ENCODE measurements at regions of chr9 and their contacts with region 1.

Region 1: GRCh38 chr9:503881-504852 is 289.5 kb downstream of the DOCK8 start:
- DNase-seq: peak; percentile 72 to 85 (median 79)
- H3K4me3 ChIP-seq: peak within 1 kb of the TSS; percentile 47 to 86
- H3K4me3 Mint-ChIP-seq: peak within 1 kb of the TSS; percentile 83 to 89 (median 86)
- H3K27ac ChIP-seq: peak within 1 kb of the TSS; percentile 12
- H3K27ac Mint-ChIP-seq: peak within 1 kb of the TSS; percentile 37 to 85 (median 83)
- H3K4me1 ChIP-seq: peaks cover 7% of the 10 kb centered on the region
- H3K4me1 Mint-ChIP-seq: peaks cover 7 to 30% (median 16%) of the 10 kb centered on the region in 4 donors
- H3K27me3 ChIP-seq: no peaks in the 10 kb centered on the region
- H3K27me3 Mint-ChIP-seq: peaks cover 3 to 5% of the 10 kb centered on the region in 2 donors

Region 2: GRCh38 chr9:214648-215493 is 289.3 kb before region 1 on chr9 and contains the start of gene DOCK8:
- CTCF ChIA-PET with region 1: no interaction called
- POLR2A ChIA-PET with region 1: no interaction called
- intact Hi-C with region 1: no loop called
- DNase-seq: peak; percentile 42 to 68 (median 55)
- H3K4me3 ChIP-seq: peak within 1 kb of the TSS; percentile 27 to 68
- H3K4me3 Mint-ChIP-seq: peak within 1 kb of the TSS; percentile 89 to 94 (median 92)
- H3K27ac ChIP-seq: peak within 1 kb of the TSS; percentile 48
- H3K27ac Mint-ChIP-seq: peak within 1 kb of the TSS; percentile 42 to 92 (median 84)
- H3K4me1 ChIP-seq: peaks cover 19% of the 10 kb centered on the region
- H3K4me1 Mint-ChIP-seq: peaks cover 11 to 29% (median 18%) of the 10 kb centered on the region in 4 donors
- H3K27me3 ChIP-seq: no peaks in the 10 kb centered on the region
- H3K27me3 Mint-ChIP-seq: no peaks in the 10 kb centered on the region
- total RNA-seq, gene DOCK8: 307 to 315 TPM

Region 3: GRCh38 chr9:447230-448025 is 56.7 kb before region 1 on chr9:
- CTCF ChIA-PET with region 1: no interaction called
- POLR2A ChIA-PET with region 1: no interaction called
- intact Hi-C with region 1: loop called (anchors 2 kb)
- DNase-seq: peak; percentile 61 to 87 (median 71)
- H3K4me3 ChIP-seq: no peak overlapping the region
- H3K4me3 Mint-ChIP-seq: peak overlapping the region; percentile 1 to 44 (median 20)
- H3K27ac ChIP-seq: peak overlapping the region; percentile 3
- H3K27ac Mint-ChIP-seq: peak overlapping the region; percentile 67 to 90 (median 84)
- H3K4me1 ChIP-seq: peaks cover 22% of the 10 kb centered on the region
- H3K4me1 Mint-ChIP-seq: peaks cover 18 to 34% (median 27%) of the 10 kb centered on the region in 4 donors
- H3K27me3 ChIP-seq: no peaks in the 10 kb centered on the region
- H3K27me3 Mint-ChIP-seq: no peaks in the 10 kb centered on the region

Region 4: DNA sequence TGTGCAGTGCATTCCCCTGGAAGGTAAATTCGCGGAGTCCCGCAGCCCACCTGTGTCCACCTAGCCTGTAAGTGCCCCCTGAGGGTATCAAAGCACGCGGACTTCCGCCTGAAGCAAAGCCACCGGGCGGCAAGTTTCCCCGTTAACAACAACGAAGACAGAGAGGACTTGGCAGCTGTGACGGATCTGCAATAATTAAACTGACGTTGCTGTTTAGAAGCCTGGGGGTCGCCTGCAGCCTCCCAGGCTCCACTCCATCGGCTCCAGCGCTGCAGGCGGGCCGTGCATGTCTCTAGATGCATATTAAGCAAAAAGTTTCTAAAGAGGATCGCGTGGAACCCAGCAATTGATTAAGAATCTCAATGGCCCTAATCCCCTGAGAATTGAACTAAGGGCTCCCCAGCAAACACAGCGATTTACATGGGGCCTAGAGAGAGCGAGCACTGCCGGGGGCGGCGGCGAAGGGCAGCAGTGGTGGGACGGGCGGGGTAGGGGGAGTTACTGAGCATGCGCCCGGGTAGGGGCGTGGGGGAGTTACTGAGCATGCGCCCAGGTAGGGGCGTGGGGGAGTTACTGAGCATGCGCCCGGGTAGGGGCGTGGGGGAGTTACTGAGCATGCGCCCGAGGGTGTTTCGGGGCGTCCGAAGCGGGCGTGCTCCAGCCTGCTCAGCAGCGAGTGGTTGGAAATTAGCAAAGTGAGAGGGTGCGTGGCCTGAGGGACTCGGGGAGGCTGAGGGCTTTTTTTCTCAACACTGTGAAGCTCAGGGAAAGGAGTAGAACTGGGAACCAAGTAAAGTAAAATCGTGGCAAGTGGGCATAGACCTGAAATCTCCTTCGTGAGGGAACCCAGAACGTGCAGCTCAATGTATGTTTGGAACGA is 34.3 kb before region 1 on chr9:
- CTCF ChIA-PET with region 1: interaction called, 9 read pairs
- POLR2A ChIA-PET with region 1: interaction called, 6 read pairs
- intact Hi-C with region 1: loop called (anchors 1 kb)
- DNase-seq: peak; percentile 80 to 89 (median 88)
- H3K4me3 ChIP-seq: peak overlapping the region; percentile 74 to 88
- H3K4me3 Mint-ChIP-seq: peak overlapping the region; percentile 89 to 99 (median 96)
- H3K27ac ChIP-seq: peak overlapping the region; percentile 68
- H3K27ac Mint-ChIP-seq: peak overlapping the region; percentile 93 to 98 (median 96)
- H3K4me1 ChIP-seq: peaks cover 21% of the 10 kb centered on the region
- H3K4me1 Mint-ChIP-seq: peaks cover 17 to 28% (median 22%) of the 10 kb centered on the region in 4 donors
- H3K27me3 ChIP-seq: no peaks in the 10 kb centered on the region
- H3K27me3 Mint-ChIP-seq: no peaks in the 10 kb centered on the region

Region 5: DNA sequence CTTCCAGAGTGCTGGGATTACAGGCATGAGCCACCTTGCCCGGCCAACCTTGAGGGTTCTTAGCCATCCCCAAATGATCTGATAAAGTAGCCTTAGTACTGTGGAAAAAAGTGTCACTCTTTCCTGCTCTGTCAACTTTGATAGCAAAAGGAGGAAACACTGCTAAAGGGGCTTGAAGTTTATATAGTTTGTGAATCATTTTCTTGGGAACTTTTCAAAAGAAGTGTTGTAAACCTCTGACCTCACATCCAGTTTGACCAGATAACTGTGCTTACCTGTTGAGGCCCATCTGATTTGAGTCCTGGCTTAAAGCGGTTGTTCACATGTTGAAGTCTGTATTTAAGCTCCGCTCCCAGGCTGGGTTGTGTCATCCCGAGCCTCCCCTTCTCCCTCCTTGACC is 13.8 kb after region 1 on chr9:
- CTCF ChIA-PET with region 1: interaction called, 5 read pairs
- POLR2A ChIA-PET with region 1: interaction called, 10 read pairs
- intact Hi-C with region 1: loop called (anchors 2 kb)
- DNase-seq: no peak
- H3K4me3 ChIP-seq: peak overlapping the region in 1 of 2 donors; percentile 5
- H3K4me3 Mint-ChIP-seq: peak overlapping the region in 5 of 8 donors; percentile 57 to 88 (median 86)
- H3K27ac ChIP-seq: no peak overlapping the region
- H3K27ac Mint-ChIP-seq: peak overlapping the region in 5 of 7 donors; percentile 85 to 98 (median 92)
- H3K4me1 ChIP-seq: peaks cover 36% of the 10 kb centered on the region
- H3K4me1 Mint-ChIP-seq: peaks cover 20 to 73% (median 29%) of the 10 kb centered on the region in 4 donors
- H3K27me3 ChIP-seq: no peaks in the 10 kb centered on the region
- H3K27me3 Mint-ChIP-seq: no peaks in the 10 kb centered on the region

Region 6: DNA sequence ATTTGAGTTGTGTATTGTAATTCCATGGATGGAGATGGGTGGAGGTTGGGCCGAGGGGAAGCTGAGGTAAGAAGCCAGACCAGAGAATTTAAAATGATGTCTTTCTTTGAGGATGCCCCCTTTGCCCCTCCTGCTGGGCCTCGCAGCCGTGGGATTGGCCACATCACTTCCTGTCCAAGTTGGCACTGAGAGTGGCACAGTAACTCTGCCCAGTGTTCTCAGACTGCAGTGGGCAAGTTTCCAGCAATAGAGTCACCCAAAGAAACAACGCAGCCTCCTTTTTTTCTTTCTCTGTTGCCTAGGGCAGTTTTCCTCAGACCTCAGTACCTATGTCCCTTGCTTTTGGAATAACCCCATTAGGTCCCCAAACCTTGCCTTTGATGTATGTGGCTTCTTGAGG is 30.7 kb after region 1 on chr9:
- CTCF ChIA-PET with region 1: interaction called, 3 read pairs
- POLR2A ChIA-PET with region 1: interaction called, 8 read pairs
- intact Hi-C with region 1: loop called (anchors 5 kb)
- DNase-seq: no peak
- H3K4me3 ChIP-seq: no peak overlapping the region
- H3K4me3 Mint-ChIP-seq: no peak overlapping the region
- H3K27ac ChIP-seq: no peak overlapping the region
- H3K27ac Mint-ChIP-seq: peak overlapping the region in 2 of 7 donors; percentile 3 to 37
- H3K4me1 ChIP-seq: peaks cover 4% of the 10 kb centered on the region
- H3K4me1 Mint-ChIP-seq: peaks cover 4 to 27% (median 11%) of the 10 kb centered on the region in 4 donors
- H3K27me3 ChIP-seq: no peaks in the 10 kb centered on the region
- H3K27me3 Mint-ChIP-seq: peaks cover 0 to 7% of the 10 kb centered on the region in 2 donors